Activated naive CD4-positive, alpha-beta T cell treated with anti-CD3 and anti-CD28 coated beads, Interleukin-2, amount 10 ng/mL, durations not matched to agents 7 days and 5 days (primary cell): ENCODE measurements at regions of chr3 and their contacts with region 1.

Region 1: GRCh38 chr3:111717601-111718000 is 122.5 kb upstream of the ZBED2 start:
- DNase-seq: peak; percentile 76
- H3K4me3 Mint-ChIP-seq: no peak overlapping the region
- H3K27ac Mint-ChIP-seq: no peak overlapping the region
- H3K4me1 Mint-ChIP-seq: peaks cover 2% of the 10 kb centered on the region
- H3K27me3 Mint-ChIP-seq: no peaks in the 10 kb centered on the region

Region 2: DNA sequence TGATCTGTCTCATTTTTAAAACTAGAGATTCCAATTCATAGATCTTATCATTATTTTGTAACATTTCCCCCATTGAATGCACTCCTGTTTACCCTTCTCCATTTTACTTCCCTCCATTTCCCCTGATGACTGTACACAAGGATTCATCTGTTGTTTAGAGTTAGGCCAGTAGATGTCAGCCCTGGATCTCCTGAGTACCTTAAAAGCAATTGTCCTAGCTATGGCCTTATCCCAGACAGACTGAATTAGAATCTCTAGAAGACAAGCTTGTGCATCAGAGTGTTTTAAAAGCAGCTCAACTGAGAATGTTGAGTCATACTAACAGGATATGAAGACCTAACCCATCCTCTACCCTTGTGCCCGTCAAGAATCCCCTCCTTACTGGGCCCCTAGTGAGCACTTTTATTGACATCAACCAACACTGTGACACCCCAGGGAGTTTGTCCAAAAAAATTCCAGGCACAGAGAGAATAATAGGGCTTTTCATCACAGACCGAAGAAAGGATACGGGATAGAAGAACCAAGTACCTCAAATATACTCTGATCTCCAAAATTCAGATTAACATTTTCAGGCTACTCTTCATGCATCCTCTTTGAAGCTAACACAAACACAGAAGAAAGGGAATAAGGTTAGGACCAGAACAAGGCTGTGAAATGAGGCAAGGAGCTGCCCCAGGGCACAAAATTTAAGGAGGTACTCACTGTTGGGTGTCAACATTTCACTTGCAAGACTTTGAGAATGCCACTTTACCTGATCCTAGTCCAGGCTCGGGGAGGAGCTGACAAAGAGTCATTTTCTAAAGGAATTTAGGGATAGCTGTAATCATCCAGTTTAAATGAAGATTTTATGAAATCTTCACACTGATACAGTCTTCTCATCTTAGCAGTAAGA is 139.6 kb before region 1 on chr3:
- CTCF ChIA-PET with region 1: interaction called, 12 read pairs
- DNase-seq: no peak
- H3K4me3 Mint-ChIP-seq: no peak overlapping the region
- H3K27ac Mint-ChIP-seq: peak overlapping the region; percentile 2
- H3K4me1 Mint-ChIP-seq: peaks cover 63% of the 10 kb centered on the region
- H3K27me3 Mint-ChIP-seq: no peaks in the 10 kb centered on the region

Region 3: DNA sequence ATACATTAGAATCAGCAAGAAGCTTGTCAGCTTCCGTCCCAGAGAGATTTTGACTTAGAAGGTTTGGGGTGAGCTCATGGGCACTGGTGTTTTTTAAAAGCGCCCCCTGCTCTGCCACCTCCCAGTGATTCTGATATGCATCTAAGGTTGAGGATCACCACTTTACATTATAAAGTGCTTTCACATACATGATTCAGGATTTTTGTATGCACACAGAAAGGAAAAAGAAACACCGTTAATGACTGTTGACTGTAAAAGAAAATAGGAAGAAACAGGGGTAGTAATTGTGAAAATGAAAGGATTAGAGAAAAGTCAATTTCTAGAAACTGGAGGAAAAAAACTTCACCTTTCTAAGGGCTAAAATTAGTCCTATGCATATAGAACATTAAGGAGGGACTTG is 17.5 kb before region 1 on chr3:
- CTCF ChIA-PET with region 1: interaction called, 20 read pairs
- DNase-seq: no peak
- H3K4me3 Mint-ChIP-seq: no peak overlapping the region
- H3K27ac Mint-ChIP-seq: peak overlapping the region; percentile 17
- H3K4me1 Mint-ChIP-seq: peaks cover 11% of the 10 kb centered on the region
- H3K27me3 Mint-ChIP-seq: no peaks in the 10 kb centered on the region

Region 4: DNA sequence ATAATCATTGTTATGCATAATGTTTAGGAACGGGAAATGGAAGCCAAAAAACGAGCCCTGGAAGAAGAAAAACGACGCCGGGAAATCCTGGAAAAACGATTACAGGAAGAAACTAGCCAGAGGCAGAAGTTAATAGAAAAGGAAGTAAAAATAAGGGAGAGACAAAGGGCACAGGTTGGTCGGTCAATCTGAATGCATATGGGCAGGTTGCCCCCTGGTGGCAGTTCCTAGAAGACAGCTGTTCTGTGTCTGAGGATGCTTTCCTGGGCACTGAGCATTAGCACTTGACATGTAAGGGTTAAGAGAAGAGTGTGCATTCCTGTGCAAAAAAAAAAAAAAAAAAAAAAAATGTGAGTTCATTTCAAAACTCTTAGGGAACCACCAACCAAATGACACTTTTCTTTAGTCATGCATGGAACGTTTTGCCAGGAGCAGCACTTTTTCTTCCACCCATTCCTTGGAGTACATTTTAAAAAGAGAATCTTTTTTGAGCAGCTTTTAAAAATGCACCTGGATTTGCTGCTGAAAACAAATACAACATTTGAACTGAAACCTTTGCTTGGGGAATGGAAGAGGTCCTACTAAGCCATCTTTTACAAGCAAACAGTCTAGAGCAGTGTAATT is 250.2 kb after region 1 on chr3:
- CTCF ChIA-PET with region 1: interaction called, 199 read pairs
- DNase-seq: peak; percentile 87
- H3K4me3 Mint-ChIP-seq: no peak overlapping the region
- H3K27ac Mint-ChIP-seq: no peak overlapping the region
- H3K4me1 Mint-ChIP-seq: peaks cover 9% of the 10 kb centered on the region
- H3K27me3 Mint-ChIP-seq: peaks cover 5% of the 10 kb centered on the region

Region 5: DNA sequence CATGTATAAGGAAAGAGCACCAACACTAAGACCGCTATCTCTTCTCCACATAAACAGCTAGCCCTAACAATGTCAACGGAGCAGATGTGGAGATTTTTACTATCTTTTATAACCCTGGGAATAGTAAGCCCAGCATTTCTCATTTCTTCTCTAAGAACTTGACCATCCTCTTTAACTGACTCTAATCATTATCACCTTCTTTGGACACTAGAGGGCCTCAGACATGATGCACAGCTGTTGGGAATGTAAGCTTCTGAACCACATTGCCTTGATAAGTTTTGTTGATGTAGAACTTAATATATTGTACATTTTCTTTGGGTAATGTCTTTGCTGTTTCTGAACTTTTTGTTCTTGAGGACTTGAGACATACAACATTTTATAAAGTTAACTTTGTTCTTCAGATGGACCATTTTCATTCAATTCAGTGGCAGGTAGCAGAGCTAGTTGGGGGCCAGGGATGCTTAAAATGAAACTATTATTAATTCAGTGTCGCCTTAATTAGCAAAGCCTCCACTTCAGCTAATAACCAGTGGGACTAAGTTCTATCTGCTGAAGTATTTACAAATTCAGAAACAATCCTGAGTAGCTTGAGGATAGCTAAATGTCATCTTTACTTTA is 271.6 kb after region 1 on chr3:
- CTCF ChIA-PET with region 1: interaction called, 14 read pairs
- DNase-seq: no peak
- H3K4me3 Mint-ChIP-seq: no peak overlapping the region
- H3K27ac Mint-ChIP-seq: no peak overlapping the region
- H3K4me1 Mint-ChIP-seq: peaks cover 23% of the 10 kb centered on the region
- H3K27me3 Mint-ChIP-seq: no peaks in the 10 kb centered on the region